ENCODE measurements at regions of chr17 and their contacts with region 1.

Region 1: DNA sequence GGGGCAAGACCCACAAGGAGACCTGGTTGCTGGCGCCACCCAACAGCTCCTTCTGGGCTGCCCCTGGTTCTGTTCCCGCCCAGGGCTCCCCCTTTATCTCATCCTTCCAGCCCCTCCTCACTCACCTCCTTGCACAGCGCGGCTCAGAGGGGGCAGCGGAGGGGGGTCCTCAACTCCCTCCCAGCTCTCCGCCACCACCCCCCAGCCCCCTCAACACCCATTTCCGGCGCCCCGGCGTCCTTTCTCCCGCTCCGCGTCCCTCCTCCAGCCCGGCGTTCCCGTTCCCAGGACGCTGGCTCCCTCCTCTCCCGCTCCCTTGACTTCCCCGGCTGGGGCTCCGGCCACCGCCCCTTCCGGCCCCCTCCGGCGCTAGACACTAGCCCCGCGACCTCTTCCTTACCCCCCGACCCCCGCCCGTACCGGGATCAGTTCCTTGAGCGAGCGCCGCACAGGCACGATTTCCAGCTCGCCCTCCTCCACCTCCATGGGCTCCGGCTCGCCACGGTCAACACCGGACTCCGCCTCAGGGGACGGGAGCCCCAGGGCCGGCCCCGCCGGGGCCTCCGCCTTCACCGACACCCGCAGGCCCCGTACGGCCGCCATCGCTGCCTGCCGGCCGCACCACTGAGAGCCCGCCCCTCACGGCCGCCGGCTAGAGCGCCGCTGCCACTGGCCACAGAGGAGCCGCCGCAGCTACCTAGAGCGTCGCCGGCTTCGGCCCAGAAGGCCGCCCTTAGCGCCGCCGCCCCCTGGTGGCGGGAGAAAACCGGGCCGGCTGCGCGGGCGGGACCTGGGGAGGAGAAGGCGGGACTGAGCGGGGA is at the start of gene NCBP3:
- DNase-seq: peak; percentile 55
- ATAC-seq: peak; percentile 98
- H3K4me3 ChIP-seq: peak within 1 kb of the TSS; percentile 96
- H3K27ac ChIP-seq: peak within 1 kb of the TSS; percentile 79
- H3K4me1 ChIP-seq: peaks cover 17% of the 10 kb centered on the region
- H3K27me3 ChIP-seq: no peaks in the 10 kb centered on the region; a peak in 1 of 4 replicates
- CTCF ChIP-seq: peak; percentile 92 to 99 (median 97)
- EP300 ChIP-seq: no peak
- POLR2A ChIP-seq: peak; percentile 98
- RAD21 ChIP-seq: 0 out of 2 replicates have a peak, but pooled peaks have one; percentile 29
- polyA plus RNA-seq, gene NCBP3: 5.2 to 8.4 TPM

Region 2: DNA sequence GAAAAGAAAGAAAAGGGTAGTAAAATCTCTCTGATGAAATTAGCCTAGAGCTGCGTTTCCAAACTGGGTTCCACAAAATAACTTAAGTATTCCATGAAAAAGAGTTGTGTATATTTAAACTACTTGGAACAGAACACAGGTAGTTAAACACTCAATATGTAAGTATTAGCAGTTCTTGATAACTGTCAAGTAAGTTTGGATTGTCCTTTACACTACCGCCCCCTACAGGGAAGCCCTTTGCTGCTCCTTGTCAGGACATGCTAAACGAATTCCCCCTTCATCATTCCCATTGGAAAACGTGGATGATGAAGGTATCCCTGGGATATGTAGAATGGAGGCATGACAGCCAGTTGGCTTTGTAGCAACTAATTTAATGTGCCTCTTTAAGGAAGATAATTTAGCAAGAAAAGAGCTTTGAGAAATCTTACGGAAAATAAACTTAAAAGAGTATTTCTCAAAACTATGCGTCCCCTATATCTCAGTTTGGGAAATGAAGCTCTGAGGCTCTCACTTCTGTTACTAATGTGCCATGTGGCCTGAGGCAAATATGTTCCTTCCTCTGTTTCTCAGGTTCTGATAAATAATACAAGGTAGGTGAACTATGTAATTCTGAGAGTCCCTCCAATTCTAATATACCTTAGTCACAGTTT is 18.6 kb before region 1 on chr17:
- CTCF ChIA-PET with region 1: interaction called, 42 read pairs
- POLR2A ChIA-PET with region 1: no interaction called
- RAD21 ChIA-PET with region 1: interaction called, 7 read pairs
- SMC1A ChIA-PET with region 1: interaction called, 5 read pairs
- in situ Hi-C with region 1: no loop called
- intact Hi-C with region 1: no loop called
- DNase-seq: no peak
- ATAC-seq: peak; percentile 65
- H3K4me3 ChIP-seq: no peak overlapping the region
- H3K27ac ChIP-seq: no peak overlapping the region
- H3K4me1 ChIP-seq: no peaks in the 10 kb centered on the region
- H3K27me3 ChIP-seq: no peaks in the 10 kb centered on the region
- CTCF ChIP-seq: peak; percentile 82 to 85 (median 82)
- EP300 ChIP-seq: no peak
- POLR2A ChIP-seq: no peak
- RAD21 ChIP-seq: peak; percentile 90

Region 3: GRCh38 chr17:3857121-3858100 is 11.6 kb after region 1 on chr17:
- CTCF ChIA-PET with region 1: interaction called, 11 read pairs
- POLR2A ChIA-PET with region 1: no interaction called
- RAD21 ChIA-PET with region 1: no interaction called
- SMC1A ChIA-PET with region 1: interaction called, 7 read pairs
- in situ Hi-C with region 1: no loop called
- intact Hi-C with region 1: no loop called
- DNase-seq: no peak
- ATAC-seq: no peak
- H3K4me3 ChIP-seq: no peak overlapping the region
- H3K27ac ChIP-seq: no peak overlapping the region
- H3K4me1 ChIP-seq: no peaks in the 10 kb centered on the region
- H3K27me3 ChIP-seq: no peaks in the 10 kb centered on the region; a peak in 1 of 4 replicates
- CTCF ChIP-seq: no peak
- EP300 ChIP-seq: no peak
- POLR2A ChIP-seq: no peak
- RAD21 ChIP-seq: no peak

Region 4: DNA sequence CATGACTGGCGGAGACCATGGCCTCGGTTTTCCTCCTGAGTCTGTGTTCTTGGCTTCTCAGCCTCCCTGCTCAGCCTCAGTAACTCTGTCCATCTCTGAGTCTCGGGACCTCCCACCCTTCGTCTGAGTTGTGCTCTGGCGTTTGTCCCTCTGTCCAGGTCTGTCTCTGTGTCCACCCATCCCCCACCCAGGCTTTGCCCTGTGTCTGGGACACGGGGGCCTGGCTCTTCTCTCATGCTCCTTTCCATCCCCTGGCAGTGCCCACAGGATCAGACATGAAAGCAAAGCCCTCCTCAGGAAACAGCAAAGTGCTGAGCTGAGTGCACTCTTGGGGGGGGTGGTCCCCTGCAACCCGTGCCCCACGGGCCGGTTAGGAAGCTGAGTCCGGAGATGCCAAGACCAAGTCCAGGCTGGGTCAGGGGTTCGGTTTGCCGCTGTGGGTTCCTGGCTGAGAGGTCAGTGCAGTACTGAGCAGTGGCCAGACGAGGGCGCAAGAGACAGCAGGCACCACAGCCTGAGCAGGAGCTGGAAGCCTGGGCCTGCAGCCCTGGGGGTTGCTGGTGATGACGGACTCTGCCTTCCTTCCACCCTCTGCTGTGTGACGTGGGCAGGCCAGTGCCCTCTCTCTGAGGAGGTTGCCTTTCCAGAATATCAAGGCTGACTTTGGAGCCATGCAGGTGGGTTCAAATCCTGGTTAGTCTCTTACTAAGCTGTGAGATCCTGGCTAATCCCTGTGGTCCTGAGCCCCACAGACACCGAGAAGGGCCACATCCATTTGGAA is 67.9 kb after region 1 on chr17:
- CTCF ChIA-PET with region 1: interaction called, 10 read pairs
- POLR2A ChIA-PET with region 1: no interaction called
- RAD21 ChIA-PET with region 1: interaction called, 10 read pairs
- SMC1A ChIA-PET with region 1: interaction called, 3 read pairs
- in situ Hi-C with region 1: no loop called
- intact Hi-C with region 1: no loop called
- DNase-seq: peak; percentile 56
- ATAC-seq: peak; percentile 73
- H3K4me3 ChIP-seq: peak overlapping the region; percentile 52
- H3K27ac ChIP-seq: peak overlapping the region; percentile 86
- H3K4me1 ChIP-seq: peaks cover 54% of the 10 kb centered on the region
- H3K27me3 ChIP-seq: no peaks in the 10 kb centered on the region
- CTCF ChIP-seq: peak; percentile 98 to 99 (median 99); a peak in 5 of 6 replicates
- EP300 ChIP-seq: no peak; a peak in 1 of 4 replicates
- POLR2A ChIP-seq: no peak
- RAD21 ChIP-seq: peak; percentile 88

Region 5: GRCh38 chr17:4074831-4075495 is 229.1 kb after region 1 on chr17:
- CTCF ChIA-PET with region 1: interaction called, 38 read pairs
- POLR2A ChIA-PET with region 1: interaction called, 5 read pairs
- RAD21 ChIA-PET with region 1: interaction called, 11 read pairs
- SMC1A ChIA-PET with region 1: interaction called, 30 read pairs
- in situ Hi-C with region 1: no loop called
- intact Hi-C with region 1: no loop called
- DNase-seq: peak; percentile 25
- ATAC-seq: peak; percentile 68
- H3K4me3 ChIP-seq: peak overlapping the region; percentile 24; the same call in 1 of the 2 replicates
- H3K27ac ChIP-seq: peak overlapping the region; percentile 77
- H3K4me1 ChIP-seq: peaks cover 33% of the 10 kb centered on the region
- H3K27me3 ChIP-seq: no peaks in the 10 kb centered on the region
- CTCF ChIP-seq: peak; percentile 77 to 82 (median 79)
- EP300 ChIP-seq: no peak
- POLR2A ChIP-seq: no peak
- RAD21 ChIP-seq: peak; percentile 79